Dendritic cell treated with granulocyte-macrophage colony-stimulating factor and Interleukin-4, amounts not matched to agents 40 ng/mL and 50 ng/mL, for 4 days (primary cell): ENCODE measurements at regions of chr19 and their contacts with region 1.

Region 1: GRCh38 chr19:18521885-18522624 is at the start of gene ELL:
- H3K4me3 Mint-ChIP-seq: peak within 1 kb of the TSS; percentile 90
- H3K27ac Mint-ChIP-seq: peak within 1 kb of the TSS; percentile 88
- H3K4me1 Mint-ChIP-seq: peaks cover 40% of the 10 kb centered on the region
- H3K27me3 Mint-ChIP-seq: no peaks in the 10 kb centered on the region

Region 2: DNA sequence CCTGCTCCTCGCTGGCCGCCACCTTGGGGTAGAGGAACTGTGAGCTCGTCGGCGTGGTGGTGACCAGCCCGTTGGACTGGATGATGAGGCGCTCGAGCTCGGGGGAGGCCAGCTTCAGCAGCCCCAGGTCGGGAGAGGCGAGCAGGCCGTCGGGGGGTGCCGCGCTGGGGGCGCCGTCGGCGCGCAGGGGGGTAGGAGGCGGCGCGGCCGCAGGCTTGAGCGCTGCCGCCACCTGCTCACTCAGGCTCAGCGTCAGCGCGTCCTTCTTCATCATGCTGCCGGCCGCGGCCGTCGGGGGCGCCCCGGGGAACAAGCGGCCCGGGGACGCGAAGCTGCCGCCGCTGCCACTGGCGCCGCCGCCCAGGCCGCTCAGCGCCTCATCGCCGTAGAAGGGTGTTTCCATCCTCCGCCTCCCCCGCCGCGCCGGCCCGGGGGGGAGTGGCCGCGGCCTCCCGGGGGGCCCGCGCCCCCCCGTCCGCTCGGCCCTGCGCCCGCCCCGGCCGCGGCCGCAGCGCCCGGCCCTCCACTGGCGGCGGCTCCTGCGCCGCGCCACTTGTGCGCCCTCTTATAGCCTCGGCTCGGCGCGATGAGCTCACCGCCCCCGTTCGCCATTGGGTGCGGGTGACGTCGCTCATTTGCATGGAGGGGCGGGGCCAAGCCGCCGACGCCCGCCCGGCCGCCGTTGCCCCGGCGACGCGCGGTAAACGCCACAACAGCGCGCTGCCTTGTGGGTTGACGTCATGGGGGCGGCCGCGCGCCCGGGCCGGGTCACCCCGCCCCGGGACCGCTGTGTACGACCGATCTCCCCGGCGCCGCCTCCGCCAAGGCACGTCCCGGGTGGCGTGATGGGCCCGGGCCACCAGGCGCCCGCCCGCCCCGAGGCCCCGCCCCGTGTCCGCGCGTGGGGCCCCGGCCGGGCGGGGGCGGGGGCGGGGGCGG is 240.7 kb before region 1 on chr19 and contains the start of gene JUND:
- intact Hi-C with region 1: no loop called
- H3K4me3 Mint-ChIP-seq: peak within 1 kb of the TSS; percentile 91
- H3K27ac Mint-ChIP-seq: peak within 1 kb of the TSS; percentile 99
- H3K4me1 Mint-ChIP-seq: peaks cover 57% of the 10 kb centered on the region
- H3K27me3 Mint-ChIP-seq: no peaks in the 10 kb centered on the region

Region 3: GRCh38 chr19:18503971-18504885 is 17.8 kb before region 1 on chr19:
- intact Hi-C with region 1: loop called (anchors 2 kb)
- H3K4me3 Mint-ChIP-seq: peak overlapping the region; percentile 52
- H3K27ac Mint-ChIP-seq: peak overlapping the region; percentile 86
- H3K4me1 Mint-ChIP-seq: peaks cover 100% of the 10 kb centered on the region
- H3K27me3 Mint-ChIP-seq: no peaks in the 10 kb centered on the region

Region 4: GRCh38 chr19:18557474-18558201 is 35.6 kb after region 1 on chr19 and contains the start of gene KXD1:
- intact Hi-C with region 1: loop called (anchors 1 kb)
- H3K4me3 Mint-ChIP-seq: peak within 1 kb of the TSS; percentile 83
- H3K27ac Mint-ChIP-seq: peak within 1 kb of the TSS; percentile 89
- H3K4me1 Mint-ChIP-seq: peaks cover 24% of the 10 kb centered on the region
- H3K27me3 Mint-ChIP-seq: no peaks in the 10 kb centered on the region

Region 5: GRCh38 chr19:18588611-18589379 is 66.7 kb after region 1 on chr19 and contains the start of gene REX1BD:
- intact Hi-C with region 1: loop called (anchors 5 kb)
- H3K4me3 Mint-ChIP-seq: peak within 1 kb of the TSS; percentile 88
- H3K27ac Mint-ChIP-seq: peak within 1 kb of the TSS; percentile 91
- H3K4me1 Mint-ChIP-seq: peaks cover 62% of the 10 kb centered on the region
- H3K27me3 Mint-ChIP-seq: no peaks in the 10 kb centered on the region

Region 6: GRCh38 chr19:18672606-18673337 is 150.7 kb after region 1 on chr19:
- intact Hi-C with region 1: no loop called
- H3K4me3 Mint-ChIP-seq: no peak overlapping the region
- H3K27ac Mint-ChIP-seq: no peak overlapping the region
- H3K4me1 Mint-ChIP-seq: peaks cover 6% of the 10 kb centered on the region
- H3K27me3 Mint-ChIP-seq: peaks cover 3% of the 10 kb centered on the region